ENCODE measurements at regions of chr1 and their contacts with region 1.

Region 1: GRCh38 chr1:108643492-108644335 is 17.2 kb downstream of the HENMT1 start:
- DNase-seq: peak; percentile 49
- H3K4me3 Mint-ChIP-seq: no peak overlapping the region
- H3K27ac Mint-ChIP-seq: peak overlapping the region; percentile 95
- H3K4me1 Mint-ChIP-seq: peaks cover 61% of the 10 kb centered on the region
- H3K27me3 Mint-ChIP-seq: no peaks in the 10 kb centered on the region

Region 2: DNA sequence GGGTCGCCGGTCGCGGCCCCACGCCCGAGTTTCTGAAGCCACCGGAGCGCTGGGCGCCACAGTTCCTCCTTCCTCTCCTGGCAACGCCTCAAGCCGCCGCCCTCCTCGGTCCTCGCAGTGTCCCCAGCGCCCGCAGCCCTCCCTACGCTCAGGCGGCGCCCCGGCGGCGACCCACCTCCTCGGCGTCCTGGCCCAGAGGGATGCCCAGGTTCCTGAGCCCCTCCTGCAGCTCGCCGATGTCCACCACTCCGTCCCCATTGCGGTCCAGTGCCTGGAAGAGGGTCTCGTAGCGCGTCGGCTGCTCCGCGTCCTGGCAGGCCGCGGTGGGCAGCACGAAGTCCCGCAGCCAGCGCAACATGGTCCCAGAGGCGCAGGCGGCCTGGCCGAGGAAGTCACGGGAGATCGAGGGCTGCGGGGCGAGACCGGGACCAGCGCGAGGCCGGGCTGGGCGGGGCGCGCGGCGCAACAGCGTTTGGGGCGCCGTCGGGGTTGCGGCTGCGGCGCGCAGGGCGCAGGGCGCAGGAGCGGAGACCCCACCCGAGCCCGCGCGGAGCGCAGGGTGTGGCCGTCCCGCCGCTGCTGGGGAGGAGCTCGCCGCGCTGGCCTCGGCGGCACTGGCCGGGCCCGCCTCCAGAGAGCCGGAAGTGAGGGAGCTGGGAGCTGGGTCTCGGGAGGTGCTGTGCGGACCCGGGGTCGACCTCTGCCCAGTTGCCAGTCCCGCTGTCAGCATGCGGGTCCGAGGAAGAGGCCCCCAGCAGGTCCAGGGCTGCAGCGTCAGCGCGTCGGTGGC is 443.7 kb before region 1 on chr1 and contains the start of gene SLC25A24:
- CTCF ChIA-PET with region 1: interaction called, 9 read pairs
- POLR2A ChIA-PET with region 1: no interaction called
- intact Hi-C with region 1: loop called (anchors 5 kb)
- DNase-seq: peak; percentile 83
- H3K4me3 Mint-ChIP-seq: peak within 1 kb of the TSS; percentile 85
- H3K27ac Mint-ChIP-seq: peak within 1 kb of the TSS; percentile 61
- H3K4me1 Mint-ChIP-seq: peaks cover 29% of the 10 kb centered on the region
- H3K27me3 Mint-ChIP-seq: no peaks in the 10 kb centered on the region
- total RNA-seq, gene SLC25A24: 18.1 to 19.4 TPM

Region 3: DNA sequence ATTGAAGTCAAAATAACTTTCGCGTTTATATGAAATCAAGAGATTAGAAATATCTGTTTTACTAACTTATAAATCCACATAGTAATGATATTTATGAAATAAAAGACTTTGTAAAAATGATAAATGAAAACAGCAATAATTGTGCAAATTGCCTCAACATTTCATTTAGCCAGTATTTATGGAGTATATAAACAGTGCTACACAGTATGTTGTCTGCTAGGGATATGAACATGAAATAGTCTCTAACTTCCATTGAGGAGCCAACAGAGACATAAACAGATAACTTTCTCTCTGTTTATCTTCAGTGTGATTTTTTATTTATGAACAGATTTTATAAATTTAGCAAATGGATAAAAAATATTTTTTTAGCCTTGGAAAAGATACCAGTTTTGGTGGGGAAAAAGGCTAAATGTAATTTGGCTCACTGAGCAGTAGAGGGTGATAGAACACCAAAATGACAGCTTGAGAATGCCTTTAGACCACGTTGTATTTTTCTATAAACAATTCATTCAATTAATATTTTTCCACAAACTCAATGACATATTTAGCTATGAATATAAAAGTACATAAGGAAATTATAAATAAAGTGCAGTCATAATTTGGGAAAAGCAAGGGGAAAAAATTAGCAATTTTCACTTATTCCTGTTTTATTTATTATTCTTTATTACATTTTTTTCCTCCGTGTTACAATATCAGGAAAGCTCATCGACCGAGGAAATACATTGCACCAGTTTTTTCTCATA is 131.3 kb before region 1 on chr1:
- CTCF ChIA-PET with region 1: interaction called, 70 read pairs
- POLR2A ChIA-PET with region 1: no interaction called
- intact Hi-C with region 1: loop called (anchors 1 kb)
- DNase-seq: no peak
- H3K4me3 Mint-ChIP-seq: no peak overlapping the region
- H3K27ac Mint-ChIP-seq: no peak overlapping the region
- H3K4me1 Mint-ChIP-seq: no peaks in the 10 kb centered on the region
- H3K27me3 Mint-ChIP-seq: peaks cover 11% of the 10 kb centered on the region

Region 4: DNA sequence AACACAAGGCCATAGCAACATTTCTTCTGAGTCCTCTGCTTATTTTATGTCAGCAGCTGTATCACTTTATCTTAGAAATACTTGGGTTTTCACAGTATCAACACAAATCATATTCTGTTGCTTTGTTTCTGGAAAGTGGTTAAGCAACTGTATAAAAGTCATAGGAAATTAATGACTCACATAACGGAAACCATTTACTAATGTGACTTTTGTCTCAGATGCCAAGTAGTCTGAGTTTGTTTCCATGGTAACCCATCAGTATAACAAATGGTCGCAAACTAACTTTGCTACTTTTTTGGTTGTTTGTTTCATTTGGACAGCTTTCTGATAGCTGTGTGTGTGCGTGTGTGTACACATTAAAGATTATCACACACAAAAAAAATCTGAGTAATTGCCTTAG is 52.8 kb before region 1 on chr1:
- CTCF ChIA-PET with region 1: interaction called, 4 read pairs
- POLR2A ChIA-PET with region 1: no interaction called
- intact Hi-C with region 1: loop called (anchors 1 kb)
- DNase-seq: no peak
- H3K4me3 Mint-ChIP-seq: no peak overlapping the region
- H3K27ac Mint-ChIP-seq: no peak overlapping the region
- H3K4me1 Mint-ChIP-seq: peaks cover 44% of the 10 kb centered on the region
- H3K27me3 Mint-ChIP-seq: no peaks in the 10 kb centered on the region

Region 5: GRCh38 chr1:108661030-108661620 is 17.4 kb after region 1 on chr1 and contains the start of gene HENMT1:
- CTCF ChIA-PET with region 1: interaction called, 13 read pairs
- POLR2A ChIA-PET with region 1: interaction called, 35 read pairs
- intact Hi-C with region 1: loop called (anchors 1 kb)
- DNase-seq: peak; percentile 86
- H3K4me3 Mint-ChIP-seq: peak within 1 kb of the TSS; percentile 82
- H3K27ac Mint-ChIP-seq: peak within 1 kb of the TSS; percentile 94
- H3K4me1 Mint-ChIP-seq: peaks cover 37% of the 10 kb centered on the region
- H3K27me3 Mint-ChIP-seq: no peaks in the 10 kb centered on the region
- total RNA-seq, gene HENMT1: 25.6 to 25.8 TPM

Region 6: GRCh38 chr1:108708691-108709660 is 65.3 kb after region 1 on chr1:
- CTCF ChIA-PET with region 1: interaction called, 16 read pairs
- POLR2A ChIA-PET with region 1: no interaction called
- intact Hi-C with region 1: loop called (anchors 1 kb)
- DNase-seq: peak; percentile 83
- H3K4me3 Mint-ChIP-seq: no peak overlapping the region
- H3K27ac Mint-ChIP-seq: no peak overlapping the region
- H3K4me1 Mint-ChIP-seq: peaks cover 28% of the 10 kb centered on the region
- H3K27me3 Mint-ChIP-seq: peaks cover 4% of the 10 kb centered on the region